HCT116 (cell line): ENCODE measurements at regions of chr11 and their contacts with region 1.

Region 1: GRCh38 chr11:4626207-4627099 is 10.8 kb upstream of the OR51D1 start:
- DNase-seq: peak; percentile 75
- ATAC-seq: peak; percentile 95
- H3K4me3 ChIP-seq: no peak overlapping the region
- H3K27ac ChIP-seq: no peak overlapping the region
- H3K4me1 ChIP-seq: no peaks in the 10 kb centered on the region
- H3K27me3 ChIP-seq: peaks cover 12% of the 10 kb centered on the region; the same call in 1 of the 2 replicates
- CTCF ChIP-seq: peak; percentile 62 to 83 (median 70)
- POLR2A ChIP-seq: no peak
- RAD21 ChIP-seq: peak; percentile 80

Region 2: GRCh38 chr11:4187055-4187988 is 439.1 kb before region 1 on chr11:
- CTCF ChIA-PET with region 1: interaction called, 9 read pairs
- POLR2A ChIA-PET with region 1: no interaction called
- RAD21 ChIA-PET with region 1: no interaction called
- intact Hi-C with region 1: loop called (anchors 5 kb)
- DNase-seq: peak; percentile 29
- ATAC-seq: peak; percentile 94
- H3K4me3 ChIP-seq: peak overlapping the region; percentile 29 to 53
- H3K27ac ChIP-seq: peak overlapping the region; percentile 5; the same call in 1 of the 2 replicates
- H3K4me1 ChIP-seq: peaks cover 0 to 12% of the 10 kb centered on the region in 2 experiments; a peak in 2 of 4 replicates
- H3K27me3 ChIP-seq: no peaks in the 10 kb centered on the region
- CTCF ChIP-seq: peak; percentile 84 to 97 (median 86)
- POLR2A ChIP-seq: no peak
- RAD21 ChIP-seq: peak; percentile 96

Region 3: GRCh38 chr11:4636962-4637661 is 10.7 kb after region 1 on chr11 and contains the start of gene OR51D1:
- CTCF ChIA-PET with region 1: interaction called, 25 read pairs
- POLR2A ChIA-PET with region 1: no interaction called
- RAD21 ChIA-PET with region 1: no interaction called
- intact Hi-C with region 1: no loop called
- DNase-seq: peak; percentile 43
- ATAC-seq: peak; percentile 98
- H3K4me3 ChIP-seq: no peak within 1 kb of the TSS
- H3K27ac ChIP-seq: no peak within 1 kb of the TSS
- H3K4me1 ChIP-seq: no peaks in the 10 kb centered on the region
- H3K27me3 ChIP-seq: peaks cover 43% of the 10 kb centered on the region
- CTCF ChIP-seq: peak; percentile 44 to 88 (median 81); a peak in 5 of 6 replicates
- POLR2A ChIP-seq: no peak
- RAD21 ChIP-seq: peak; percentile 73
- total RNA-seq, gene OR51D1: not detected

Region 4: DNA sequence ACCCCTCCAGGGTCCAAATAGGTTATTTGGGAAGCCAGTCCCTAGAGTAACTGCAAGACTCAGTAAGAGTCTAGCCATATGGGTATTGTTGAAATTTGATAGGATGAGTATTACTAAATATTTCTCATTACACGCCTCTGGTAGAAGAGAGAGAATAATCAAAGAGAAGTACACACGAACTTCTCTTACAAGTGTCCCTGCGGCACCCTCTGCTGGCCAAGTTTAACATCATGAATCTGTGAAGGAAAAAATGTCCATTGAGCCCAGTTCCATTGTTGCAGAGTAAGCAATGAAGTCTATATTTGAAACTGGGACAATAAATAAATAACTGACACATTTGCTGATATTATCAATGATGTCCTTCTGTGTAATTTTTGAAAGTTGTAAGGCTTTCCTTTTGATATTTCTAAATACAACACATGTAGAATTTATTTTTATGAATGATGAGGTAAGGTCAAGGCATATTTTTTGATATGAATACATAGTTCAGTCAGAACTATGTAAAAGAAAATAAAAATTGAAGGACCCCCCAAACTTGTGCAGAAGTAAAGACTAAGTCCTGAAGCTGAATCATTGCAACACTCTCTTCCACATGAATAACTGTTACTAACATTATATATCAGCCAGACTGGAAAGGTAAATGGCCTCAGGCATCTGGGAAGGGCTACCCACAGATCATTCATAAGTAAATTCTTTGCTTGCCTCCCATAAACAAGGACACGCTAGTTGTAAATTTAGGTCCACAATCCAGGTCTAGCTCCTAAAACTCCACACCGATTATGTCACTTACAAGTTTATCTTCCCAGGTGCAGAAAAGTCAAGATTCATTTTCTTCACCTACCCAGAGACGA is 378.2 kb after region 1 on chr11:
- CTCF ChIA-PET with region 1: no interaction called
- POLR2A ChIA-PET with region 1: no interaction called
- RAD21 ChIA-PET with region 1: no interaction called
- intact Hi-C with region 1: loop called (anchors 1 kb)
- DNase-seq: peak; percentile 36
- ATAC-seq: peak; percentile 71
- H3K4me3 ChIP-seq: no peak overlapping the region
- H3K27ac ChIP-seq: no peak overlapping the region
- H3K4me1 ChIP-seq: no peaks in the 10 kb centered on the region
- H3K27me3 ChIP-seq: peaks cover 33% of the 10 kb centered on the region
- CTCF ChIP-seq: peak; percentile 56 to 73 (median 64); a peak in 5 of 6 replicates
- POLR2A ChIP-seq: no peak
- RAD21 ChIP-seq: peak; percentile 74

Region 5: DNA sequence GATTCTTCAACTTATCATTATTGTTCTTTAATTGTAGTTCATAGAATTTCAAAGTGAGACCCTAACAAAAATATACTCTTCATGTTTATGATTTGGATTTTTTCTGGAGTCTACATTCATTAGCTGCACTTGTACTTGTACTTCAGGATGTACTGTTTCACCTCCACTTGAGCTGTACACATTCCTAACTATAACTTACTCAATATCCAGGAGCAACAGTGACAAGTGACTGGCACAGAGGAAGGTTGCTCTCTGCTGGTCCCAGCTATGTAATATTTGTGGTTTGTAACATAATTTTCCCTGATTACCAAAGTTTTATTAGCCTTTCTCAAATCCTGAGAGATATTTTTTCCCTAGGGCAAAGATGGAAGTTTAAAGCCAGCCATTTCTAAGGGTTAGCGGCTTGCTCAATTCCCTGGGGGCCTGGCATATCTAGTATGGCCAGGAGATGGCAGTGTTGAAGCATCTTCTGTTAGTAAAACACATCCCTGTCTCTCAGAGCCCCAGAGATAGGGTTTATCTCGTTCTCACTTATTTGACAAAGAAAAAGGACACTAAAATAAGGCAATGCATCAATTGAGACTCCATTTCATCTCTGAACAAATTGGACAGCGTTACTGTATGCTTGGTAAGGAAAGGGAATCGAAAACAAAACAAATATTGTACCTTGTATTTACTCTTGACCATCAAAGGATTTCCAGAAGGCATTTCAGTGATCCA is 497.5 kb after region 1 on chr11:
- CTCF ChIA-PET with region 1: no interaction called
- POLR2A ChIA-PET with region 1: no interaction called
- RAD21 ChIA-PET with region 1: no interaction called
- intact Hi-C with region 1: loop called (anchors 10 kb)
- DNase-seq: peak; percentile 56
- ATAC-seq: peak; percentile 99
- H3K4me3 ChIP-seq: no peak overlapping the region
- H3K27ac ChIP-seq: no peak overlapping the region
- H3K4me1 ChIP-seq: no peaks in the 10 kb centered on the region
- H3K27me3 ChIP-seq: peaks cover 64% of the 10 kb centered on the region
- CTCF ChIP-seq: peak; percentile 60 to 95 (median 83)
- POLR2A ChIP-seq: no peak
- RAD21 ChIP-seq: peak; percentile 82

Region 6: DNA sequence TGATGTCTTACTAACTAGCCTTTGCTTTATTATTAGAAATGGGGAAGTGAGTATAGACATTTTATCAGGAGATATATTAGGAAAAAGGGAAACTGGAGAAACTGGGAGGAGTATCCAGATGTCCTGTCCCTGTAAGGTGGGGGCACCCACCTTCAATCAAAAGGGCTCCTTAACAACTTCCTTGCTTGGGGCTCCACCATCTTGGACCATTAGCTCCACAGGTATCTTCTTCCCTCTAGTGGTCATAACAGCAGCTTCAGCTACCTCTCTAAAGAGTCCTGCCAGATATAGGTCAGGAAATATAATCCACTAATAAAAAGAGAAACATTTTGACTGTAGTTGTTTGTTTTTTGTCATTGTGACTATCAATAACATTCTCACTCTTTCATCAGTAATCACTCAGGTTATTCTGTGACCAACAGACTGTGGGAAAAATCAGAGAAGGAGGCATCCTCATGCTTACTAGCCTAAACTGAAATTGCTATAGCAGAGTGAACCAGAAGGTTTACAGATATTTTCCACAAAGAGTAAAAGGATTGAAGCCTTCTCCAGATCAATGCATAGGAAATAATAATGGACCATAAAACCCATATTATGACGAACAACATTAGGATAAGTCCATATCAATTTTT is 664.9 kb after region 1 on chr11:
- CTCF ChIA-PET with region 1: no interaction called
- POLR2A ChIA-PET with region 1: no interaction called
- RAD21 ChIA-PET with region 1: no interaction called
- intact Hi-C with region 1: loop called (anchors 5 kb)
- DNase-seq: peak; percentile 35
- ATAC-seq: peak; percentile 91
- H3K4me3 ChIP-seq: no peak overlapping the region
- H3K27ac ChIP-seq: no peak overlapping the region
- H3K4me1 ChIP-seq: peaks cover 0 to 5% of the 10 kb centered on the region in 2 experiments; a peak in 1 of 4 replicates
- H3K27me3 ChIP-seq: no peaks in the 10 kb centered on the region
- CTCF ChIP-seq: peak; percentile 71 to 87 (median 79)
- POLR2A ChIP-seq: no peak
- RAD21 ChIP-seq: peak; percentile 82

Region 7: GRCh38 chr11:5891216-5891800 is 1264.9 kb after region 1 on chr11:
- CTCF ChIA-PET with region 1: no interaction called
- POLR2A ChIA-PET with region 1: no interaction called
- RAD21 ChIA-PET with region 1: no interaction called
- intact Hi-C with region 1: loop called (anchors 10 kb)
- DNase-seq: no peak
- ATAC-seq: peak; percentile 40
- H3K4me3 ChIP-seq: no peak overlapping the region
- H3K27ac ChIP-seq: no peak overlapping the region
- H3K4me1 ChIP-seq: no peaks in the 10 kb centered on the region
- H3K27me3 ChIP-seq: peaks cover 37% of the 10 kb centered on the region
- CTCF ChIP-seq: peak; percentile 19 to 40 (median 37); a peak in 3 of 6 replicates
- POLR2A ChIP-seq: no peak
- RAD21 ChIP-seq: peak; percentile 59